GM10248 (cell line): ENCODE measurements at regions of chr15 and their contacts with region 1.

Region 1: GRCh38 chr15:77044228-77045042 is 26.5 kb downstream of the TSPAN3 start:
- DNase-seq: no peak
- CTCF ChIP-seq: no peak

Region 2: DNA sequence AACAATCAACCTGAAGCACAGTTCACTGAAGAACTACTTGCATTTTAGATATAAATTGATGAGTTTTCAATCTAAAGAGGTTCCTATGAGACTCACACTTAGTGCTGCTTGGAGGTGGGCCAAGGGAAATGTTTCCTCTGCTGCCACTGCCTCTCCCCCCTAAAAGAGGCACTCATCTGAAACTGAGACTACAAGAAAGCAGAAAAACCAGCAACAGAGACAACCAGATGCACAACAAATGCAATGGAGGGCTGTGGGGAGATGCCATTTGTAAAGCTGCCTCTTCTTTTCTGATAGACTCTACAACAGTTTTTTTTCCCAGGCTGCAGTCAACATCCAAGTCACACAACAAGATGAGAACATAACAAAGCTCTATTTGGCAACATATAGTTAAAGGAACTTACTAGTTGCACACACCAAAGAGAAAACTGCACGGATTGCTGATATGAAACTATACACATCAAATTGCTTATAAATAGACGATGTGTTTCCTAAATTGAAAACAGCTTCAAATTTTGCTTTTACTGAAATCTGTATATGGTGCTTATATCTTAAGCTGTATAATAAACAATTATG is 15.4 kb after region 1 on chr15:
- CTCF ChIA-PET with region 1: interaction called, 47 read pairs
- POLR2A ChIA-PET with region 1: no interaction called
- DNase-seq: no peak
- CTCF ChIP-seq: no peak